Right cardiac atrium (tissue), 5 donors: ENCODE measurements at regions of chr1 and their contacts with region 1.

Region 1: GRCh38 chr1:112619520-112620376 is at the start of gene CAPZA1:
- DNase-seq: peak; percentile 93 to 97 (median 96)
- ATAC-seq: peak; percentile 97 to 99
- H3K4me3 ChIP-seq: peak within 1 kb of the TSS; percentile 86
- H3K27ac ChIP-seq: peak within 1 kb of the TSS; percentile 100
- H3K4me1 ChIP-seq: peaks cover 3% of the 10 kb centered on the region
- H3K27me3 ChIP-seq: no peaks in the 10 kb centered on the region
- total RNA-seq, gene CAPZA1: 30.2 to 53.4 (median 43.4) TPM

Region 2: GRCh38 chr1:112390775-112391602 is 228.8 kb before region 1 on chr1:
- intact Hi-C with region 1: loop called in 1 of 4 experiments (anchors 5 kb)
- DNase-seq: peak; percentile 88 to 95 (median 91)
- ATAC-seq: peak; percentile 68 to 84
- H3K4me3 ChIP-seq: peak overlapping the region; percentile 60
- H3K27ac ChIP-seq: peak overlapping the region; percentile 93
- H3K4me1 ChIP-seq: peaks cover 6% of the 10 kb centered on the region
- H3K27me3 ChIP-seq: no peaks in the 10 kb centered on the region

Region 3: GRCh38 chr1:112431038-112431437 is 188.7 kb before region 1 on chr1:
- intact Hi-C with region 1: no loop called
- DNase-seq: no peak
- ATAC-seq: no peak
- H3K4me3 ChIP-seq: no peak overlapping the region
- H3K27ac ChIP-seq: no peak overlapping the region
- H3K4me1 ChIP-seq: no peaks in the 10 kb centered on the region
- H3K27me3 ChIP-seq: no peaks in the 10 kb centered on the region

Region 4: GRCh38 chr1:112674439-112674985 is 54.8 kb after region 1 on chr1 and contains the start of gene MOV10:
- intact Hi-C with region 1: loop called in 2 of 4 experiments (anchors 10 kb)
- DNase-seq: peak; percentile 77 to 92 (median 90)
- ATAC-seq: peak; percentile 76 to 80
- H3K4me3 ChIP-seq: peak within 1 kb of the TSS; percentile 95
- H3K27ac ChIP-seq: peak within 1 kb of the TSS; percentile 71
- H3K4me1 ChIP-seq: no peaks in the 10 kb centered on the region
- H3K27me3 ChIP-seq: no peaks in the 10 kb centered on the region
- total RNA-seq, gene MOV10: 14.1 to 20.3 (median 18.3) TPM

Region 5: GRCh38 chr1:112778137-112778536 is 158.4 kb after region 1 on chr1:
- intact Hi-C with region 1: no loop called
- DNase-seq: no peak
- ATAC-seq: no peak
- H3K4me3 ChIP-seq: no peak overlapping the region
- H3K27ac ChIP-seq: no peak overlapping the region
- H3K4me1 ChIP-seq: no peaks in the 10 kb centered on the region
- H3K27me3 ChIP-seq: no peaks in the 10 kb centered on the region